Activated T-helper 1 cell treated with anti-CD3 and anti-CD28 coated beads, Interleukin-12 subunit alpha, Interleukin-12 subunit beta, Interleukin-2, Interleukin-4 antibody, amounts not matched to agents 30 ng/mL and 10 ng/mL and 1 ng/mL, durations not matched to agents 14 hours and 24 hours and 36 hours (primary cell): ENCODE measurements at regions of chr4 and their contacts with region 1.

Region 1: GRCh38 chr4:140373328-140374129 is at the start of gene SCOC:
- DNase-seq: peak; percentile 97
- H3K4me3 Mint-ChIP-seq: no peak within 1 kb of the TSS
- H3K27ac Mint-ChIP-seq: peak within 1 kb of the TSS; percentile 32
- H3K4me1 Mint-ChIP-seq: peaks cover 23% of the 10 kb centered on the region
- H3K27me3 Mint-ChIP-seq: no peaks in the 10 kb centered on the region
- total RNA-seq, gene SCOC: 33.9 and 34.0 TPM in 2 replicates

Region 2: GRCh38 chr4:139295206-139295941 is 1078.2 kb before region 1 on chr4:
- intact Hi-C with region 1: loop called (anchors 10 kb)
- DNase-seq: peak; percentile 92
- H3K4me3 Mint-ChIP-seq: peak overlapping the region; percentile 93
- H3K27ac Mint-ChIP-seq: peak overlapping the region; percentile 94
- H3K4me1 Mint-ChIP-seq: peaks cover 39% of the 10 kb centered on the region
- H3K27me3 Mint-ChIP-seq: no peaks in the 10 kb centered on the region

Region 3: GRCh38 chr4:139554893-139555704 is 818.4 kb before region 1 on chr4:
- intact Hi-C with region 1: loop called (anchors 2 kb)
- DNase-seq: peak; percentile 78
- H3K4me3 Mint-ChIP-seq: peak overlapping the region; percentile 93
- H3K27ac Mint-ChIP-seq: peak overlapping the region; percentile 96
- H3K4me1 Mint-ChIP-seq: peaks cover 47% of the 10 kb centered on the region
- H3K27me3 Mint-ChIP-seq: peaks cover 13% of the 10 kb centered on the region

Region 4: DNA sequence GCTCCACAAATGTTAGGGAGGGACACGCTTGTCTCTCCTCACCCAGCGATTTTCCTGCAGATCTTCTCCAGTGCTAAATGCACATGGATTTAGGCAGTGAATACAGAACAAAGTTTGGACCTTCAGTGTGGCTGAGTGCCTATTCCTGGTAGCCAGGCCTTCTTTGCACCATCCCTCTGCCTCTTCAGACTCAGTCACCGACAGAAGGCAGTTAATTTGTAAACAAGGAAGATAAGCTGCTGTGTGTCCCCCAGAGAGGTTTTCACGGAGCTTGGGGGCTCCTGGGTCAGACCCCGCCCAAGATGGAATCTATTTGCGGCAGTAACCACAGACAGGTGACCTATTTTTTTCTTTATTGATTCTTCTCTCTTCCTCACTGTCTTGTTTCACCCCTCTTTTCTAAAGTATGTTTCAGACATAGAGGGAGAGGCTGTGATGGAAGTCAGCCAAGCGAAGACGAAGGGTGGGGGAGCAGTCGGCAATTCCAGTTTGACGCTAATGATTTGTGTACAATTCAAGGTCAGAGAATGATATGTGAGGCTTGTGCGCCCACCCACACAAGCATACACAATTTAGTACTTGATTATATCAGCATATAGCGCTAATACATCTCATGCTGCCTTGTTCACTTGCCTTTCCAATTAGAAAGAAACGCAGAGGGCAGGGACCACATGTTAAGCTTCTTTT is 507.1 kb before region 1 on chr4:
- intact Hi-C with region 1: no loop called
- DNase-seq: no peak
- H3K4me3 Mint-ChIP-seq: no peak overlapping the region
- H3K27ac Mint-ChIP-seq: no peak overlapping the region
- H3K4me1 Mint-ChIP-seq: no peaks in the 10 kb centered on the region
- H3K27me3 Mint-ChIP-seq: peaks cover 11% of the 10 kb centered on the region

Region 5: DNA sequence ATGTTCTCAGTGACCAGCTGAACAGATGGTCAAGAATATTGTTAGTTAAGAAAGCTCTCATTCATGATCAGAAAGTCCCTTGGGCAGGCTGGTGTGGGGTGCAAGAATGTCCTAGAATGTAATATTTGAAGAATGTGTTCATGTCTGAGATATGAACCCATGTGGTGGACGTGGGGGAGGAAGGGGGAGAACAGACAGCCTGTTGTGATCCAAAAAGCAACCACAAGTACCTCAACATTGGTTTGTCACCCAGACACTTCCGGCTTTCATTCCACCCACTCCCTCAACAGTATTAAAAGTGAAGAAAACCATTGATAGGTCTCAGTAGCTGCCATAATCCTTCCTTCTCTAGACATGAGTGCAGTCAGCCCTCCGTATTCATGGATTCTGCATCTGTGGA is 301.7 kb before region 1 on chr4:
- intact Hi-C with region 1: loop called (anchors 10 kb)
- DNase-seq: peak; percentile 62
- H3K4me3 Mint-ChIP-seq: peak overlapping the region; percentile 71
- H3K27ac Mint-ChIP-seq: peak overlapping the region; percentile 70
- H3K4me1 Mint-ChIP-seq: peaks cover 59% of the 10 kb centered on the region
- H3K27me3 Mint-ChIP-seq: peaks cover 48% of the 10 kb centered on the region

Region 6: DNA sequence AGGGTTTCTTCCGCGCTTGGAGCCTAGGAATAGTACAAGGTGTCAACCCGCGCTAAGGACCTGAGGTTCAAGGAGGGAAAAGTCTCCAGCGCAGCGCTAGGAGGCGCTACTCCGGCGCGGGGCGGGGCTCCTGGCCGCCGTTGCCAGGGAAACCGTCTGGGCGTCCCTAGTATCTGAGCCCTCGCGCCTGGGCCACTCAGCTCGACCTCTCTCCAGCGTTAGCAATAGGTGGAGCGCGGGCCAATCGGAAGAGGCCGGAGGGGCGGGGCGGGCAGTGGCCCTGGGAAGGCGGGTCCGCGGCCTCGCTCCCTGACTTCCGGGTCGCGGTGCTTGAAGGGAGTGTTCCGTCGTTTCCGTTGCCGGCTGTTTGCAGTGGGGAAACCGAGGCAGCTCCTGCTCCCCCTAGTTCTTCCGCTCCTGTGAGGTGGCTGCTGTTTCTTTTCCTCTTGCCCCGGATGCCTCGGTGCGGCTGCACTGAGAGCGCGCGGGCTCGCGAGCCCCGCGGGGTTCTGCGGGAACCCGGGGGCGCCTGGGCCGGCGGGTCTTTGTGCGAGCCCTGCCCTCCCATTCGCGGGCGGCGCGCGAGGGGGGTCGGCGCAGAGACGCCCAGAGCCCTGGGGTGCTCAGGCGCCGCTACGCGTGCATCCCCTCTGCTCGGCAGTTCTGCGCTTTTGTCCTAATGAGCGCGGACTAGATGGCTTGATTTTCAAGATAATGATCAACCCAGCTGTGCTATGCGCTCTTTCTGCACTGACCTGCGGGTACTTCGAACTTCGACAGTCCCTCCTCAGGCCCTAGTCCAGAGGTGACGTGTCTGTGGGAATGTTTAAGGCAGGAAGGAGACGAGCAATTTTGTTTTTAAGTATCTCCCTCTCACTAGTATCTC is 150.6 kb after region 1 on chr4 and contains the start of gene ELMOD2:
- intact Hi-C with region 1: loop called (anchors 1 kb)
- DNase-seq: peak; percentile 97
- H3K4me3 Mint-ChIP-seq: peak within 1 kb of the TSS; percentile 88
- H3K27ac Mint-ChIP-seq: peak within 1 kb of the TSS; percentile 55
- H3K4me1 Mint-ChIP-seq: peaks cover 19% of the 10 kb centered on the region
- H3K27me3 Mint-ChIP-seq: no peaks in the 10 kb centered on the region
- total RNA-seq, gene ELMOD2: 10.8 and 15.7 TPM in 2 replicates

Region 7: GRCh38 chr4:141220655-141221605 is 847.4 kb after region 1 on chr4 and contains the start of gene ZNF330:
- intact Hi-C with region 1: loop called (anchors 2 kb)
- DNase-seq: peak; percentile 83
- H3K4me3 Mint-ChIP-seq: peak within 1 kb of the TSS; percentile 93
- H3K27ac Mint-ChIP-seq: peak within 1 kb of the TSS; percentile 98
- H3K4me1 Mint-ChIP-seq: peaks cover 47% of the 10 kb centered on the region
- H3K27me3 Mint-ChIP-seq: peaks cover 6% of the 10 kb centered on the region
- total RNA-seq, gene ZNF330: 57.8 and 62.9 TPM in 2 replicates